ENCODE measurements at regions of chr1 and their contacts with region 1.

Region 1: GRCh38 chr1:227489572-227489971 is 73.8 kb upstream of the ZNF678 start:
- DNase-seq: peak in 1 of 2 donors; percentile 46
- ATAC-seq: peak; percentile 64 to 95 (median 88)
- H3K4me3 ChIP-seq: no peak overlapping the region
- H3K27ac ChIP-seq: peak overlapping the region in 1 of 10 donors; percentile 9
- H3K4me1 ChIP-seq: peaks cover 0 to 14% (median 0%) of the 10 kb centered on the region in 9 donors
- H3K27me3 ChIP-seq: no peaks in the 10 kb centered on the region
- CTCF ChIP-seq: no peak

Region 2: GRCh38 chr1:227542143-227543120 is 52.9 kb after region 1 on chr1:
- intact Hi-C with region 1: loop called in 5 of 10 experiments (anchors 5 to 10 kb)
- DNase-seq: peak; percentile 84 to 91
- ATAC-seq: peak; percentile 95 to 97 (median 97)
- H3K4me3 ChIP-seq: peak overlapping the region; percentile 45 to 88 (median 76)
- H3K27ac ChIP-seq: peak overlapping the region; percentile 2 to 78 (median 68)
- H3K4me1 ChIP-seq: peaks cover 0 to 17% (median 12%) of the 10 kb centered on the region in 9 donors
- H3K27me3 ChIP-seq: peaks cover 0 to 7% (median 0%) of the 10 kb centered on the region in 7 donors
- CTCF ChIP-seq: peak; percentile 95 to 99 (median 99)

Region 3: GRCh38 chr1:227734856-227735538 is 245.4 kb after region 1 on chr1 and contains the starts of genes JMJD4 and SNAP47:
- intact Hi-C with region 1: loop called in 1 of 10 experiments (anchors 10 kb)
- DNase-seq: peak; percentile 92 to 93
- ATAC-seq: peak; percentile 89 to 95 (median 92)
- H3K4me3 ChIP-seq: peak within 1 kb of the TSS; percentile 74 to 100 (median 92)
- H3K27ac ChIP-seq: peak within 1 kb of the TSS; percentile 70 to 96 (median 92)
- H3K4me1 ChIP-seq: peaks cover 7 to 49% (median 33%) of the 10 kb centered on the region in 9 donors
- H3K27me3 ChIP-seq: no peaks in the 10 kb centered on the region
- CTCF ChIP-seq: no peak
- total RNA-seq, gene JMJD4: 7.6 to 13.4 (median 9.9) TPM
- total RNA-seq, gene SNAP47: 23.2 to 102 (median 65.4) TPM

Region 4: DNA sequence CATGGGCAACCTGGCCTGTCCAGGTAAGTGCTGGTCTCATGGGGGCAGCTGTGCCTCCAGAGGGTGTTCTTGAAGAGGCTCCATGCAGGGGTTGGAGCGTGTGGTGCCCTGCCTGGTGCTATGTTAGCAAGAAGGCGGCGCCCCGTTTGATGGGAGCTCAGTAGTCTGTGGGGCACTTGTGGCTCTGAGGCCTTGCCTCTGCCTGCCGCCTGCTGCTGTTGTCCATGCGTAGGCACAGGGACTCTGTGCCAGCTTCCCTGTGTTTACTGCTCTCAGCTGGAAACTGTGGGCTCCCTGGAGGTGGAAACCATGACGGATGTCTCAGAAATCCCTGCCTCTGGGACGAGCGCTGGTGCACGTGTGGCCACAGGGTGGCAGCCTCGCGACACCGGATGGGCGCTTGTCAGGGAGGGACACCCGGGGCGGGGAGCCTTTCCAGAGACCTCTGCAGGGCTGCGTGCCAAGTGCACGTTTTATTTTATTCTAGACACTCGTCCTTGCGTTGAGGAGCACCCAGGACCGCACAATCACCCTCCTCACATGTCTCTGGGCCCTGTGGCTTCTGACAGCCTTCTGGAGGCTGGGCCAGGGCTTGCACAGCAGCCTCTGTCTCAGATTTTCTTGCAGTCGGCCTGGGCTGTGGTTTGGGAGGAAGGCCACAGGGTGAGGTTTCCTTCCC is 272.8 kb after region 1 on chr1:
- intact Hi-C with region 1: loop called in 3 of 10 experiments (anchors 5 to 10 kb)
- DNase-seq: peak; percentile 90
- ATAC-seq: peak; percentile 81 to 89 (median 84)
- H3K4me3 ChIP-seq: peak overlapping the region in 4 of 10 donors; percentile 6 to 34 (median 24)
- H3K27ac ChIP-seq: peak overlapping the region in 8 of 10 donors; percentile 5 to 91 (median 63)
- H3K4me1 ChIP-seq: peaks cover 11 to 69% (median 54%) of the 10 kb centered on the region in 9 donors
- H3K27me3 ChIP-seq: no peaks in the 10 kb centered on the region
- CTCF ChIP-seq: peak; percentile 80 to 97 (median 92)

Measured in heart right ventricle (tissue), 16 donors.